ENCODE measurements at regions of chr1 and their contacts with region 1.

Region 1: DNA sequence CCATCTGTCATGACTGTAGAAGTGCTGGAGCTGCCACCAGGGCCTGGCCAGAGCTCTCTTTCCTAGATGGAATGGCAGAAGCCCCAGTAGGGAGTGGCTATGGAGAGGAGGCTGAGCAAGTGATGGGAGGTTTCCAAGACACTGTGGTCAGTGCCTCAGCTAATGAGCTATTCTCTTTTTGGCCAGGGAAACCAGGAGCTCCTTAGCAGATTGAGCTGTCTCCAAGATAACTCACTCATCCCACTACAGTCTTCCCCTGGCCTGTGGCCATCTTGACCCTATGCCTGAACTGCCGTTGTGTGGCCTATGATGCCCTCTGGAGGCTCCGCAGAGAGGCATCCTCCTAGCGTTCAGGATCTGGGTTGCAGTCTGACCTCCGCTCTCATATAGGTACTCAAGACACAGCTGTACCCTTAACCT is 60.5 kb downstream of the ERI3 start:
- DNase-seq: peak; percentile 73
- ATAC-seq: peak; percentile 97
- H3K4me3 Mint-ChIP-seq: no peak overlapping the region
- H3K27ac Mint-ChIP-seq: no peak overlapping the region
- H3K4me1 Mint-ChIP-seq: no peaks in the 10 kb centered on the region
- H3K27me3 Mint-ChIP-seq: no peaks in the 10 kb centered on the region
- CTCF ChIP-seq: no peak; the same call in 1 of the 2 replicates

Region 2: GRCh38 chr1:44103270-44104131 is 191.1 kb before region 1 on chr1:
- CTCF ChIA-PET with region 1: interaction called, 23 read pairs
- POLR2A ChIA-PET with region 1: no interaction called
- DNase-seq: peak; percentile 84
- ATAC-seq: peak; percentile 30
- H3K4me3 Mint-ChIP-seq: no peak overlapping the region
- H3K27ac Mint-ChIP-seq: no peak overlapping the region
- H3K4me1 Mint-ChIP-seq: peaks cover 8% of the 10 kb centered on the region
- H3K27me3 Mint-ChIP-seq: peaks cover 8% of the 10 kb centered on the region
- CTCF ChIP-seq: no peak

Region 3: DNA sequence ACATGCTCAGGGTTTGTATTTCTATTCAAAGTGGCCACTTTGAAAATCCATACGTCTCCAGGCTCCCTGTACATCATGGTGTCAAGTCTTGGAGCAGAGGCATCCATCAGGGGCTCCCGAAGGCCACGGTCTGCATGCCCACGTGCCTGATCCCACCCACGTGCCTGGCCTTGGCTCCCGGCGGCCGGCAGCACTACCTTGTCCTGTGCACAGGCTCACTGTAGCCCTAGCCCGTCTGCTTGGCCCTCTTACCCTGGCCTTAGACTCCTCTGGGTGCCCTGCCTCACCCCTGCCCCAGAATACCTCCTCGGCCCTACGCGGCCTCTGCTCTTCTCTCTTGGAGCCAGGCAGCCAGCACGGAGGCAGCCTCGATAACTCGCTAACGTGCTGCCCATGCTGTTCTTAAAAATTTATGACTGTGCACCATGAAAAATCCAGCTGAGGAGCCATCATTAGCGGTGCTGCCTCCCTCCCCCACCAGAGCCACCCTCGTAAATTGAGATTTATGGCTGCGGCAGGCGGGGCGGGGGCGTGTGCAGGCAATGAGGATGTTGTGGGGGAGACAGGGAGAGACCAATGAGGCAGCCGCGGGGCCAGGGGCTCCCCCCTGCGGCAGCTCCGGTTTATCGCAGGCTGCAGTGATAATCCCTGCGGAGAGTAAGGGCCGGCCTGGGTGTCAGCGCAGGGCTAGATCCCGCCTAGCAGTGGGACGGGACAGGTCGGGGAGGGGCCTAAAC is 56.7 kb before region 1 on chr1:
- CTCF ChIA-PET with region 1: interaction called, 19 read pairs
- POLR2A ChIA-PET with region 1: no interaction called
- DNase-seq: peak; percentile 89
- ATAC-seq: peak; percentile 98
- H3K4me3 Mint-ChIP-seq: peak overlapping the region; percentile 44
- H3K27ac Mint-ChIP-seq: peak overlapping the region; percentile 46
- H3K4me1 Mint-ChIP-seq: peaks cover 36% of the 10 kb centered on the region
- H3K27me3 Mint-ChIP-seq: no peaks in the 10 kb centered on the region
- CTCF ChIP-seq: peak; percentile 39; the same call in 1 of the 2 replicates

Region 4: DNA sequence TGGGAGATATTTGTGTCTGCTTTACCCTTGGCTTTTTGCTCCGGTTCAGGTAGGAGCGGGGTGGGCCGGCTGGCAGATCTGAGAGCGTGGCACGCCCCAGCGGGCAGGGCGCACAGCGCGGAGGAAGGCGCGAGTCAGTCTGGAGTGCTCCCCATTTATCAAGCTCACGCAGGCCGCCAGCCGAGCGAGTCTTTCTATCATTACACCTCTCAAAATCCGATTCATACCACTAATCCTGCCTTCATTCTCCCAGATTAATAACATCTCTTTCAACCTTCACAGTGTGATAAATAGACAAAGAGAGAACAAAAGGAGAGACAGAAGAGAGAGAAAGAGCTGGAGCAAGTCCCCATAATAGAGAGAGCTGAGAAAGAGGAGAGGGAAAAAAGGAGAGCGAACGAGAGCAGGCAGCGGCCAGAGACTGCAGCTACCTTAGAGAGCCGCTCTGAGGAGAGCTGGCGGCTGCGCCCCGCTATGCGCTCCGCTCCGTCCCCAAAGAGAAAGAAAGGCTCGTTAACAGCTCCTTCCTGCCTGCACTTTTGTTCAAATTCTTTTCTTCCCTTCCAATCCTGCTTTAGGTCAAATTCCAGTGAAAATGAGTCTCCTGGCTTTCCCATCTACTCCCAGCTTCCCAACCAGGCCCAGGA is 33.3 kb before region 1 on chr1:
- CTCF ChIA-PET with region 1: interaction called, 14 read pairs
- POLR2A ChIA-PET with region 1: no interaction called
- DNase-seq: no peak
- ATAC-seq: peak; percentile 83
- H3K4me3 Mint-ChIP-seq: peak overlapping the region; percentile 21; the same call in 1 of the 2 replicates
- H3K27ac Mint-ChIP-seq: peak overlapping the region; percentile 81
- H3K4me1 Mint-ChIP-seq: peaks cover 55% of the 10 kb centered on the region
- H3K27me3 Mint-ChIP-seq: no peaks in the 10 kb centered on the region
- CTCF ChIP-seq: no peak

Region 5: GRCh38 chr1:44275991-44276405 is 18.6 kb before region 1 on chr1:
- CTCF ChIA-PET with region 1: interaction called, 16 read pairs
- POLR2A ChIA-PET with region 1: no interaction called
- DNase-seq: no peak
- ATAC-seq: peak; percentile 59
- H3K4me3 Mint-ChIP-seq: no peak overlapping the region
- H3K27ac Mint-ChIP-seq: no peak overlapping the region
- H3K4me1 Mint-ChIP-seq: no peaks in the 10 kb centered on the region
- H3K27me3 Mint-ChIP-seq: no peaks in the 10 kb centered on the region
- CTCF ChIP-seq: no peak

Region 6: DNA sequence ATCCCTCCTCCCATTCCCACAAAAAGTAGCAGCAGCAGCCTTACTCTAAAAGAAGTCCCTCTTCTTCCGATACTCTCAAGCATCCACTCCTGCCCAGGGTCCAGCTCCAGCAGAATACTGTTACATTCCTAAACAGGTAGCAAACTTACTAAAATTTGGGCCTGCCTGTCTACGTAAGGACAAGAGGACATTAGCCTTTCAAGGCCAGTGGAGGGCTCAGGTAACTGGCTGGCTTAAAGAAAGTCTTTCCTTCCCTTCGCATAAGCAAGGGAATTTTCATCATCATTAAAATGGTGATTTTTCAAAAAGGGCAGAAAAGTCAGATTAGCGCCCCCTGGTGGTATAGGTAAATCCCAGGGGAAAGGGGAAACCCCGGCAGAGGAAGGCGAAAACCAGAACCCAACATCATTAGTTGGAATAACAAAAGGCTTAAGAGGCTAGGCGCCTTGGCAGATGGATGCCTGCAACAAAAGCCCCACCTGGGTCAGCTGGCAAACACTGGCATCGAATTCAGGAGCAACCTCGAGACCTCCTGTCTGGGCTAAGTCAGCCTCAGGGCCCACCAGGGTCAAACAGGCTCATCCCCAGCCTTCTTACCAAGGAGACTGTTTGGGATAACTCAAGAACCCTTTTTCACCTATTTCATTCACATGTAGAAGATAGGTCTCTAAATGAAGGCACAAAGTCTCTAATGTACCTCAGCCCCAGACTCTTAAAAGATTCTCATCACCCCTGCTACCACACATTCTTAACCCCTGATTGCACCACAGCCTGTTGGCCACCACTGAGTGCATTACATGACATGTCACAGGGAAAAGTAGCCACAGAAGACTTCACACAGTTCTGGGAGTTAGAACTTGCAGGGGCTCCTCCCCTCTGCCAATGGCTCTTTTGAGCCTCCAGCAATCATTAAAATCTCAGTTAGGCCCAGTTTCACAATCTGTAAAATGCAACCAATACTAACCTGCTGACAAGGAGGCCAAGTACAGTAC is 23.8 kb after region 1 on chr1:
- CTCF ChIA-PET with region 1: interaction called, 12 read pairs
- POLR2A ChIA-PET with region 1: no interaction called
- DNase-seq: peak; percentile 69
- ATAC-seq: peak; percentile 82
- H3K4me3 Mint-ChIP-seq: no peak overlapping the region
- H3K27ac Mint-ChIP-seq: peak overlapping the region; percentile 55; the same call in 1 of the 2 replicates
- H3K4me1 Mint-ChIP-seq: peaks cover 22% of the 10 kb centered on the region
- H3K27me3 Mint-ChIP-seq: no peaks in the 10 kb centered on the region
- CTCF ChIP-seq: peak; percentile 75

Region 7: DNA sequence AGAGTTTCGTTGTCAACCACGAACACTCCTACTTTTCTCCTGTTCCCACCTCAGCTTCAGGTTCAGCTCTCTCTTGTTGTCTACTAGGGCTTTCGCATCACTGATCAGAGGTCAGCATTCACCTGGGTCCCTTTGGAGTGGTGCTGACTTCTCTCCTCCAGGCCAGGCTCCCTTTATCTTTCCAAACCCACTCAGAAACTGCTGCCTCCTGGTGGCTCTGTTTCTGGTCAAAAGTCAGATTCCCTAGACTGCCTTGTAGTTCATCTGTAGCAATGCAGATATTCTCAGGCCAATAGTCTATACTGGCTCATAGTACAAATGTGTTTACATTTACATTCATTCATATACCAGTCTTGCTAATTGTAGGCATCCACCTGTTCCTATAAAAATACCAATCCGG is 66.9 kb after region 1 on chr1:
- CTCF ChIA-PET with region 1: no interaction called
- POLR2A ChIA-PET with region 1: no interaction called
- DNase-seq: no peak
- ATAC-seq: peak; percentile 67
- H3K4me3 Mint-ChIP-seq: no peak overlapping the region
- H3K27ac Mint-ChIP-seq: no peak overlapping the region
- H3K4me1 Mint-ChIP-seq: peaks cover 31% of the 10 kb centered on the region
- H3K27me3 Mint-ChIP-seq: peaks cover 17% of the 10 kb centered on the region
- CTCF ChIP-seq: no peak